Stomach (tissue), 19 donors: ENCODE measurements at regions of chr14 and their contacts with region 1.

Region 1: DNA sequence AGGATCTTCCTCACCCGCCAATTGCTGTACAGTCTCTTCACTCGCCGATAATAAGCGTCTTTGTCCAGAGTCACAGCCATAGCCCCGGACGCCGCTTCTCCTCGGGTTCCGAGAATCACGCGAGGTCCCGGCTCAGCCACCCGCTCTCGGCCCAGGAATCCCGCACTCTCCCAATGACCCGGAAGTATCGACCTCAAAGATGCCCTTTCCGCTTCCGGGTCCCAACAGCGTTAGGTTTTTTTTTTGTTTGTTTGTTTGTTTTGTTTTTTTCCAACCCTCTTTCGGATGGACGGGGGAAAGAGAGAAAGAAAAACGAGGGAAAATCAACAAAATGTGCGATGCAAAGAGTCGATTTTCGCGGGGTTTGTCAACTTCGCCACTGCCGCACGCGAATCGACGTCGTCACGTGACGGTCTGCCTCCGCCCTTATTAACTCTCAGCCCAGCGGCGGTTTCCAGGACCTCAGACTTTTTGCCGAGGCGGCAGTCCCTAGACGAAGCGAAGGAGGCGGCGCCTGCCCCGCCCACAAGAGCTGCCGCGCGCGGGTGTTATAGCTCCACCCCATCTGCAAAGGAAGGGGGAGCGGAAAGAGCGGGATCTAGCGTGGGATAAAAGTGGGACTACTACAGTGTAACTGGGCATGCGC is at the start of gene SUPT16H:
- DNase-seq: peak; percentile 95 to 98
- H3K4me3 ChIP-seq: peak within 1 kb of the TSS; percentile 73 to 92 (median 80)
- H3K27ac ChIP-seq: peak within 1 kb of the TSS; percentile 88 to 94 (median 90)
- H3K4me1 ChIP-seq: peaks cover 6 to 49% (median 40%) of the 10 kb centered on the region in 4 donors
- H3K27me3 ChIP-seq: no peaks in the 10 kb centered on the region
- CTCF ChIP-seq: no peak
- EP300 ChIP-seq: no peak
- POLR2A ChIP-seq: peak in 2 of 4 donors; percentile 33 to 51
- total RNA-seq, gene SUPT16H: 14.2 to 76.2 (median 27.4) TPM

Region 2: DNA sequence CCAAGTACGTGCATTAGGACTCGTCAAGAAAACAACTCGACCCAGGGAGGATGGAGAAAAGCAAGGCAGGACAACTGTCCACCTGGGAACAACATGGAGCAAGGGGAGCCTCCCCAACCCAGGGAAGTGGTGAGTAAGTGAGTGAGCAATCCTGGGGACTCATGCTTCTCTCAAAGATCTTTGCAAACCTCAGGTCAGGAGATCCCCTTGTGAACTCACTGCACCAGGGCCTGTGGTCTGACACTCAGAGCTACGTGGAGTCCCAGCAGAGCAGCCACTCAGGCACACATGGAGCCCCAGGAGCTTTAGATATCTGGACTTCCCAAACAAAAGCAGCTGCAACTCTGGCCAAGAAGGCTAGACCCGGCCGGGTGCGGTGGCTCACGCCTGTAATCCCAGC is 215.9 kb before region 1 on chr14:
- intact Hi-C with region 1: no loop called
- DNase-seq: no peak
- H3K4me3 ChIP-seq: no peak overlapping the region
- H3K27ac ChIP-seq: no peak overlapping the region
- H3K4me1 ChIP-seq: no peaks in the 10 kb centered on the region
- H3K27me3 ChIP-seq: peaks cover 0 to 4% (median 0%) of the 10 kb centered on the region in 3 donors
- CTCF ChIP-seq: no peak
- EP300 ChIP-seq: no peak
- POLR2A ChIP-seq: no peak

Region 3: GRCh38 chr14:21233457-21234076 is 150.4 kb before region 1 on chr14:
- intact Hi-C with region 1: loop called (anchors 10 kb)
- DNase-seq: peak in 1 of 2 donors; percentile 12
- H3K4me3 ChIP-seq: no peak overlapping the region
- H3K27ac ChIP-seq: no peak overlapping the region
- H3K4me1 ChIP-seq: peaks cover 33 to 83% (median 60%) of the 10 kb centered on the region in 4 donors
- H3K27me3 ChIP-seq: no peaks in the 10 kb centered on the region
- CTCF ChIP-seq: no peak
- EP300 ChIP-seq: no peak
- POLR2A ChIP-seq: no peak

Region 4: DNA sequence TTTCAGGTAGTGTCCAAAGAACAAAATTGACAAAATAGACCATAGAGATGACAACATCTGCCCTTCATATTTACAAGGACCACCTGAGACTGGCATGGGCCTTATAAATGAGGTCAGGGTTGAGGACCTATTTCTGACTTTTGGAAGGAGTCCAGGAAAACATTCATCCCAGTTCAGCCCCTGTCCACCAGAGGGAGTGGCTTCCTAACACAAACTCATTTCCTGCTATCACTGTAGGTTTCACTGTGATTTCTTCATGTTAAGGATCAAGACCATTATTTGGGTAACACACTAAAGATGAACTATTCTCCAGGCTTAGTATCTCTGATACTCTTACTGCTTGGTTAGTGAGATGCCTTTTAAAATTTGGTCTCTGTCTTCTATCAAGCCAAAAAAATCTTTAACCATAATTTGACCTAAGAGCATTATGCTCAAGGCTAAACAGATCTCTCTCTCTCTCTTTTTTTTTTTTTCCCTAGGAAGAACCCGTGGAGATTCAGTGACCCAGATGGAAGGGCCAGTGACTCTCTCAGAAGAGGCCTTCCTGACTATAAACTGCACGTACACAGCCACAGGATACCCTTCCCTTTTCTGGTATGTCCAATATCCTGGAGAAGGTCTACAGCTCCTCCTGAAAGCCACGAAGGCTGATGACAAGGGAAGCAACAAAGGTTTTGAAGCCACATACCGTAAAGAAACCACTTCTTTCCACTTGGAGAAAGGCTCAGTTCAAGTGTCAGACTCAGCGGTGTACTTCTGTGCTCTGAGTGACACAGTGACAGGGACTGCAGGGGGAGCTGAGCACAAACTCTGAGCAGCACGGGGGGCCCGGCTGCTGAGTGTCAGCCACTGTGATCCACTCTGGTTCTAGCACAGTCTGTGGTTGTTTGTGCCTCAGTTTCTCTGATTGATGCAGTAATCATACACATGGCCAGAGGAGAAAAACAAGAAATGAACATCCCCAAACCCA is 557.2 kb after region 1 on chr14:
- intact Hi-C with region 1: no loop called
- DNase-seq: peak in 1 of 2 donors; percentile 14
- H3K4me3 ChIP-seq: no peak overlapping the region
- H3K27ac ChIP-seq: no peak overlapping the region
- H3K4me1 ChIP-seq: no peaks in the 10 kb centered on the region
- H3K27me3 ChIP-seq: no peaks in the 10 kb centered on the region
- CTCF ChIP-seq: peak in 4 of 7 experiments; percentile 23 to 47 (median 36)
- EP300 ChIP-seq: no peak
- POLR2A ChIP-seq: no peak